ENCODE measurements at regions of chr17 and their contacts with region 1.

Region 1: GRCh38 chr17:78421484-78422266 is 43.2 kb downstream of the PGS1 start:
- DNase-seq: peak; percentile 70
- H3K4me3 Mint-ChIP-seq: no peak overlapping the region
- H3K27ac Mint-ChIP-seq: no peak overlapping the region
- H3K4me1 Mint-ChIP-seq: peaks cover 7% of the 10 kb centered on the region
- H3K27me3 Mint-ChIP-seq: no peaks in the 10 kb centered on the region
- CTCF ChIP-seq: peak; percentile 97

Region 2: DNA sequence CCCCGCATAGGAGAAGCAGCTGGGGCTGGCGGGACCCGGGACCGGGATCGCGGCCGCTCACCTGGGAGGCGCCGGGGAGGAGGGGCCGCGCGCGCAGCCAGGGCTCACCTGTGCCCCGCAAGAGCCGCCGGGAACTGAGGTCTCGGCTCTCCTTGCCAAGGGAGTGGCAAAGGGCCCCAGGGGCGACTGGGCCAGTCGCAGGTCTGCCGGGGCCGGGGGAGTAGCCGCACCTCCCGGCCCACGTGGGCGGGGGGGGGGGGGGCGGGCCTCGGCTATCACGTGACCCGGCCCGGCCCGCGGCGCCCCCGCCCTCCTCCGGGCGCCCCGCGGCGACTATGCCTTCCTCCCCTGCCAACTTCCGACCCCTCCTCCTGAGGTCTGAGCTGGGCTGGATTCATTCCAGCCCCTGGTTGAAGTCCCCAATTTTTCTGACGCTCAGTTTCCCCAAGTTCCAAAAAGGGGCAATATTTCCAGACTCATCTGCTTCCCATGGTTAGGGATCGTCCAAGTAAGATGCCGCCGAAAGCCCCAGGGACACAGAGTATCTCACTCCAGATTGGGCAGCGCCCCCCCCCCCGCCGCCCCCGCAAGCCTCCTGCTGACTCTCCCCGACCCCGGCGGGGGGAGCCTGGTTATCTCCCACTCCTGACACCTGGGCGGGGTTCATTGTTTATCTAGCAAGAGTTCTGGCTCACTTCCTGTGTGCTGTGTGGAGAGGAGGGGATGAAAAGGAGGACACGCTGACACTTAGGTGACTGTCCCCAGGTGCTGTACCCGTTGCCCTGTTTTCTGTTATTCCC is 292.9 kb before region 1 on chr17 and contains the start of gene TMC6:
- CTCF ChIA-PET with region 1: no interaction called
- POLR2A ChIA-PET with region 1: no interaction called
- intact Hi-C with region 1: no loop called
- DNase-seq: peak; percentile 56
- H3K4me3 Mint-ChIP-seq: peak within 1 kb of the TSS; percentile 77
- H3K27ac Mint-ChIP-seq: no peak within 1 kb of the TSS
- H3K4me1 Mint-ChIP-seq: no peaks in the 10 kb centered on the region
- H3K27me3 Mint-ChIP-seq: peaks cover 5% of the 10 kb centered on the region
- CTCF ChIP-seq: no peak
- total RNA-seq, gene TMC6: 3.1 and 7.3 TPM in 2 replicates

Region 3: DNA sequence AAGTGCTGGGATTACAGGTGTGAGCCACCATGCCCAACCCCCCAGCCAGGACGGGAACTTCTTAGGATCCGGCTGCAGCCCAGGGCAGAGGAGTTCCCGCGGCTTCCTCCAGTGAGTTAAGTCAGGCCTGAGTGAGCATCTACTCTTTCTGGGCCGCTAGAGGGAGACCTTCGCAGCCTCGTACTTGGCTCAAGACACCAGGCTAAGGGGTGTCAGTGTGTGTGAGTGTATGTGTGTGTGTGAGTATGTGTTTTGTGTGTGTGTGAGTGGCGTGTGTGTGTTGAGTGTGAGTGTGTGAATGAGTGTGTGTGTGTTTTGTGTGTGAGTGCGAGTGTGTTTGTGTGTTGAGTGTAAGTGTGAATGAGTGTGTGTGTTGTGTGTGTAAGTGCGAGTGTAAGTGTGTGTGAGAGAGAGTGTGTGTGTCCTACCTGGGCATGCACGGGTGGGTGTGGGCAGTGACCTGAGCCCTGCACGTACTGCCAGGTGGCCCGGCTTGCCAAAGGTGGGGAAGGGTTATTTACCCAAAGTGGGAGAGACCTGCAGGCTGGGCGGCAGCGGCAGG is 131.8 kb before region 1 on chr17:
- CTCF ChIA-PET with region 1: interaction called, 20 read pairs
- POLR2A ChIA-PET with region 1: interaction called, 6 read pairs
- intact Hi-C with region 1: loop called (anchors 1 kb)
- DNase-seq: peak; percentile 85
- H3K4me3 Mint-ChIP-seq: no peak overlapping the region
- H3K27ac Mint-ChIP-seq: no peak overlapping the region
- H3K4me1 Mint-ChIP-seq: peaks cover 8% of the 10 kb centered on the region
- H3K27me3 Mint-ChIP-seq: no peaks in the 10 kb centered on the region
- CTCF ChIP-seq: peak; percentile 85

Region 4: GRCh38 chr17:78360371-78361224 is 61.1 kb before region 1 on chr17:
- CTCF ChIA-PET with region 1: interaction called, 36 read pairs
- POLR2A ChIA-PET with region 1: interaction called, 21 read pairs
- intact Hi-C with region 1: loop called (anchors 1 kb)
- DNase-seq: peak; percentile 89
- H3K4me3 Mint-ChIP-seq: peak overlapping the region; percentile 73
- H3K27ac Mint-ChIP-seq: no peak overlapping the region
- H3K4me1 Mint-ChIP-seq: peaks cover 7% of the 10 kb centered on the region
- H3K27me3 Mint-ChIP-seq: no peaks in the 10 kb centered on the region
- CTCF ChIP-seq: peak; percentile 85

Region 5: DNA sequence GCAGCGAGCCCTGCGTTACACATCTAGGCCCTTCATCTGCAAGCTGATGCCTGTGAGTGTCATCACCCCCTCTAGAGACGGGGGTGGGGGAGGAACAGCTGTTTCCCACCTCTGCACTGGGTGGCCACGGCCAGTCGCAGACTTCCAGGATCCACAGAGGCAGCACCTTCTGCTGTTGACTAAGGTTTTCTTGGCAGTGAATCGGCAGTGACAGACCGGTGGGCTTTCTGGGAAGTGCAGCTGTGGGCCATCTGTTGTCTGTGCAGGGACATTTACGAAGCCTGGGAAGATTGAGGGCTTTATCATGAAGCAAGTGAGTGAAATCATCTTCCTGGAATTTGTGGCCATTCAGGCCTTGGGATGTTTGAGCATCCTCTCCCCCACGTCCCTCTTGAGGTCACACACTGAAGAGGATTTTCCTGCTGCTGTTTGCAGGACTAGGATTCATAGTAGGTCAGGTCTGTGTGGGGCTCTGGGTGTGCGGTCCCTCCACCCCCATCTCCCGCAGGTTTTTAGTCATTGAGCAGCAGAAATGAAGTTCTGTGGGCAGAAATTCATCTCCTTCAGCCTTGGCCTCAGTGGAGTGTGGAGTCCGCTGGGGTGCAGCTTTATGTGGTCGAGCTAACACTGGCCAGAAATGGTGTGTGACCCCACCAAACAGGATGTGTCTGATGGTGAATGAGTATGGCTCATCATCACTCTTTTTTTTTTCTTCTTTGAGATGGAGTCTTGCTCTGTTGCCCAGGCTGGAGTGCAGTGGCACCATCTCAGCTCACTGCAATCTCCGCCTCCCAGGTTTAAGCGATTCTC is 31.2 kb before region 1 on chr17:
- CTCF ChIA-PET with region 1: interaction called, 14 read pairs
- POLR2A ChIA-PET with region 1: interaction called, 7 read pairs
- intact Hi-C with region 1: no loop called
- DNase-seq: peak; percentile 36
- H3K4me3 Mint-ChIP-seq: no peak overlapping the region
- H3K27ac Mint-ChIP-seq: no peak overlapping the region
- H3K4me1 Mint-ChIP-seq: peaks cover 20% of the 10 kb centered on the region
- H3K27me3 Mint-ChIP-seq: no peaks in the 10 kb centered on the region
- CTCF ChIP-seq: no peak

Region 6: GRCh38 chr17:78665952-78666920 is 244.6 kb after region 1 on chr17:
- CTCF ChIA-PET with region 1: no interaction called
- POLR2A ChIA-PET with region 1: no interaction called
- intact Hi-C with region 1: no loop called
- DNase-seq: peak; percentile 23
- H3K4me3 Mint-ChIP-seq: no peak overlapping the region
- H3K27ac Mint-ChIP-seq: peak overlapping the region; percentile 60
- H3K4me1 Mint-ChIP-seq: peaks cover 23% of the 10 kb centered on the region
- H3K27me3 Mint-ChIP-seq: no peaks in the 10 kb centered on the region
- CTCF ChIP-seq: no peak